ENCODE measurements at regions of chr17 and their contacts with region 1.

Region 1: GRCh38 chr17:5272322-5272721 is 9.8 kb upstream of the RABEP1 start:
- DNase-seq: no peak
- ATAC-seq: no peak
- H3K4me3 ChIP-seq: no peak overlapping the region
- H3K27ac ChIP-seq: no peak overlapping the region
- H3K4me1 ChIP-seq: peaks cover 0 to 5% of the 10 kb centered on the region in 2 experiments; a peak in 1 of 4 replicates
- H3K27me3 ChIP-seq: no peaks in the 10 kb centered on the region
- CTCF ChIP-seq: no peak
- POLR2A ChIP-seq: no peak
- RAD21 ChIP-seq: no peak

Region 2: DNA sequence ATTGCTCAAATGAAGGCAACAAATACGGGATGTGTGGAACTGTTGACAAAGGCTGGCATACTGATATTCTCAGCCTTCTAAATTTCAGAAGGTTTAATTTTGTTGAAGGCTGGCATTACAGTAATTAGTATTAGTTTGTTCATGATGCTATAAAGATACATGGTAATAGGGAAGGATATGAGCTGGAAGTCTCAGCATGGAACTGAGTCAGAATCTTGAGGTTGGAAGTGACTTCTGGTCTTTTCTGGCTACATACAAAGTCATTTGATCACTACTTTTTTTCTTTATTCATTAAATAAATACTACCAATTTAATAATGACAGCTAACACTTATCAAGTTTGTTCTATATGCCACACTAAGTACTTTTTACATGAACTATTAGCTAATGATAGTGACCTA is 32.3 kb after region 1 on chr17:
- CTCF ChIA-PET with region 1: no interaction called
- POLR2A ChIA-PET with region 1: no interaction called
- RAD21 ChIA-PET with region 1: no interaction called
- intact Hi-C with region 1: no loop called
- DNase-seq: no peak
- ATAC-seq: no peak
- H3K4me3 ChIP-seq: no peak overlapping the region
- H3K27ac ChIP-seq: no peak overlapping the region
- H3K4me1 ChIP-seq: peaks cover 0 to 18% of the 10 kb centered on the region in 2 experiments; a peak in 3 of 4 replicates
- H3K27me3 ChIP-seq: no peaks in the 10 kb centered on the region
- CTCF ChIP-seq: no peak
- POLR2A ChIP-seq: no peak
- RAD21 ChIP-seq: no peak

Region 3: GRCh38 chr17:5919089-5919488 is 646.8 kb after region 1 on chr17:
- CTCF ChIA-PET with region 1: no interaction called
- POLR2A ChIA-PET with region 1: no interaction called
- RAD21 ChIA-PET with region 1: no interaction called
- intact Hi-C with region 1: loop called (anchors 5 kb)
- DNase-seq: no peak
- ATAC-seq: no peak
- H3K4me3 ChIP-seq: no peak overlapping the region
- H3K27ac ChIP-seq: no peak overlapping the region
- H3K4me1 ChIP-seq: peaks cover 0 to 8% of the 10 kb centered on the region in 2 experiments; a peak in 1 of 4 replicates
- H3K27me3 ChIP-seq: peaks cover 34% of the 10 kb centered on the region
- CTCF ChIP-seq: no peak
- POLR2A ChIP-seq: no peak
- RAD21 ChIP-seq: no peak

Measured in HCT116 (cell line).